AG04449 (cell line): ENCODE measurements at regions of chr3 and their contacts with region 1.

Region 1: DNA sequence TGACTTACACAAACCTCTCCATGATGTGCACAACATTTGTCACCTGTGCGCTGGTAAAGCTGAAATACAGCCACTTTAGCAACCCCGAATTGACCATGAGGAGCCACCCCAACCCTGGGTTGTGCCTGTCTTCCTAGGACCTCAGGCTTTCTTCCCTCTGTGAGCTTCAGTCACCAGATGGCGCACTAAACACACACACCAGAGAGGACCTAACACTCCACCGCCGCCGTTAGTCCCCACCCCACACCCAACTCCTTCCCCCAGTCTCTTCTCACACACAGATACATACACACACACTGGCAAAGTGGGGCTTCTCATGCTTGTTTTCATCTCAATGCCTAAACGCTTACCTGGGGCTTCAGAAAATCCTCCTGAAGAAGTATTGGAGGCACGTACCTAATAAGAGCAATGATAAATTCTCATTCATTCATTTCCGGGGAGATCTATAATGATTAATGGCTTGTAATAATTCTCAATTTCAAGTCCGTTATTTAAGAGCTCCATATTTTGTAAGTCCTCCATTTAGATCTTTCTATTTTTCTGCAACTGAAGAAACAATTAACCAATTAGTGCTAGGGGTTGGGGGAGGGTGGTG is 2.1 kb upstream of the CCDC80 start:
- DNase-seq: peak; percentile 67
- H3K4me3 ChIP-seq: no peak overlapping the region
- CTCF ChIP-seq: peak; percentile 82

Region 2: DNA sequence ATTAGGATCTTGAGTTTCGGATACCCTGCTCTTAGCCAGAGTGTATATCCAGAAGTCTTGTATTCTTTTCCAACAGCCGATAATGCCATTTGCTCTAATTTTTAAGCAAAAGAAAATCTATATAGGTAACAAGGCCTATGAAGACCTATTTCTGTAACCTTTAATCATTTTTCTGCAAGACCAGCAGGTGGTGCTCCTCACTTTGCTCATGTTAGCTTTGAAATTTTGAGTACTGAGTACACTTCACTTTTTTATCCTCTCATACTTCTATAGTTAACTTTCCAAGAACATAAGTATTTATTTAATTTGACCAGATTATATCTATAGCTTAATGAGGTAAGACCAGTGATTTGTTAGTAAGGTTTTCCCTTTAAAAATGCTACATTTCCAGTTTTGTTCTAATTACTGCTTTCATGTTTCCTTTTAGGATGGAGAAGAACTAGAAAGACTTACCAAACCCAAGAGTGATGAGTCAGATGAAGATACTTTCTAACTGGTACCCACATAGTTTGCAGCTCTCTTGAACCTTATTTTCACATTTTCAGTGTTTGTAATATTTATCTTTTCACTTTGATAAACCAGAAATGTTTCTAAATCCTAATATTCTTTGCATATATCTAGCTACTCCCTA is 60.6 kb before region 1 on chr3:
- CTCF ChIA-PET with region 1: interaction called, 36 read pairs
- POLR2A ChIA-PET with region 1: interaction called, 4 read pairs
- DNase-seq: peak; percentile 37
- H3K4me3 ChIP-seq: no peak overlapping the region
- CTCF ChIP-seq: peak; percentile 53

Region 3: GRCh38 chr3:112681822-112682325 is 38.9 kb after region 1 on chr3:
- CTCF ChIA-PET with region 1: interaction called, 13 read pairs
- POLR2A ChIA-PET with region 1: interaction called, 12 read pairs
- DNase-seq: peak; percentile 67
- H3K4me3 ChIP-seq: no peak overlapping the region
- CTCF ChIP-seq: no peak

Region 4: DNA sequence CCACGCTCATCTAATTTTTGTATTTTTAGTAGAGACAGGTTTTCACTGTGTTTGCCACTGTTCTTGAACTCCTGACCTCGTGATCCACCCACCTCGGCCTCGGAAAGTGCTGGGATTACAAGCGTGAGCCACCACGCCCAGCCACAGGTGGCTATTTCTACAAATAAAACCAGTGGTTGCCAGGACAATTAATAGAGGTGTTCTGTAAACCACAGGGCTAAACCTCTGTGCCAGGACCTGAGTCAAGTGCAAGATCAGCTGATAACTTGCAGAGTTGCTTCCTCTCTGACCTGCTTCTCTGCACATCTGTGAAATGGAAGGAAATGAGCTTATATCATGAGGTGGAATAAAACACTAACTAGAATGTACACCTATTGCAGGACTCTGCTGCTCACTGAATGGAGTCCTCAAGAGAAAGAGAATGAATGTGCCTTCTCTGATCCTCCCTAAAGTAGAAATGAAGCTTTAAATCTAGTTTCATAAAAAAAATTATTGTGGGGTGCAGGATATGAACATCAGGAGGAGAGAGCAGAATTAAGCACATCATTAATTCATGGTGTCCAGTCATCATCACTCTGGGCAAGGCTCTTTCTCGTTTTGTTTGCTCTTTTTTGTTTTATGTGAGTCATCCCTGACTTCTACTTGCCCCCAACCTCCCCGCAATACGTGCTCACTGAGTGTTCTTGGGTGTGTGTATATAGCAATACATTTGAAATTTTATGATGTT is 131.0 kb after region 1 on chr3:
- CTCF ChIA-PET with region 1: interaction called, 36 read pairs
- POLR2A ChIA-PET with region 1: interaction called, 5 read pairs
- DNase-seq: peak; percentile 69
- H3K4me3 ChIP-seq: no peak overlapping the region
- CTCF ChIP-seq: no peak

Region 5: DNA sequence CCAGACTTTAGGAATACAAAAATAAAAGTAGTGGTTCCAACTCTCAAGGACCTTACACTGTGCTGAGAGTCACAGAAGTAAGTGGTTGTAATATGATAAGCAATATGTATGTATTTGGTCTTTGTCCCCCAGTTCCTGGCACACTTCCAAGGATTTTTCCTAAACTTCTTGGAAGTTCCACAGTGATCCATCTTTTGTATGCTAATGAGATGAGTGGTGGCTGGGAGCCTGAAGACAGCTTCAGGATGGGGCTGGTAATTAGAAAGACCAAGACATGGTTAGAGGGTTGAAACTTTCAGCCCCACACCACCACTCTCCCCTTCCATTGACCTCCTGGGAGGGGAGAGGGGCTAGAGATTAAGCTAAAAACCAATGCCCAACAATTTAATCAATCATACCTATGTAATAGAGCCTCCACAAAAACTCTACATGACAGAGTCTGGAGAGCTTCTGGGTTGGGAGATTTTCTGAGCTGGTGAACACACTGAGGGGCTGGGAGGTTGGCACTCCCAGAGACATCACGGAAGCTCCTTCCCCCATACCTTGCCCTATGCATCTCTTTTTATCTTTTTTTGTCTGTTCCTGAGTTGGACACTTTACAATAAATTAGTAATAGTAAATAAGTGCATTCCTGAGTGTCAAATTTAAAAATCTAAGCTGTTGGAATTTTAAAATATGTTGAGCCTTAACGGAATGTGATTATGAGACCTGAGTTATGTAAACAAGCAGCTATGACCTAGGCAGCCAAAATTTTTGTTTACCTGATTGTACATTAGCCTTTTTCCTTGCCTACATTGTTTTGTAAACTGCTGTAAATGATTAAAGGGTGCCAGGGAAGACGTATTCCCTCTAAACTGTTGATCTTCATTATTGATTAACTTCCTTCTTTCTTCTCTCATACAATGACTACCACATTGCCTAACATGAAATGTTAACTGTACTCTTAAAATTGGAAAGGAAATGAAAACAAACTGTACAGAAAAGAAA is 179.4 kb after region 1 on chr3:
- CTCF ChIA-PET with region 1: interaction called, 223 read pairs
- POLR2A ChIA-PET with region 1: no interaction called
- DNase-seq: no peak
- H3K4me3 ChIP-seq: no peak overlapping the region
- CTCF ChIP-seq: no peak

Region 6: DNA sequence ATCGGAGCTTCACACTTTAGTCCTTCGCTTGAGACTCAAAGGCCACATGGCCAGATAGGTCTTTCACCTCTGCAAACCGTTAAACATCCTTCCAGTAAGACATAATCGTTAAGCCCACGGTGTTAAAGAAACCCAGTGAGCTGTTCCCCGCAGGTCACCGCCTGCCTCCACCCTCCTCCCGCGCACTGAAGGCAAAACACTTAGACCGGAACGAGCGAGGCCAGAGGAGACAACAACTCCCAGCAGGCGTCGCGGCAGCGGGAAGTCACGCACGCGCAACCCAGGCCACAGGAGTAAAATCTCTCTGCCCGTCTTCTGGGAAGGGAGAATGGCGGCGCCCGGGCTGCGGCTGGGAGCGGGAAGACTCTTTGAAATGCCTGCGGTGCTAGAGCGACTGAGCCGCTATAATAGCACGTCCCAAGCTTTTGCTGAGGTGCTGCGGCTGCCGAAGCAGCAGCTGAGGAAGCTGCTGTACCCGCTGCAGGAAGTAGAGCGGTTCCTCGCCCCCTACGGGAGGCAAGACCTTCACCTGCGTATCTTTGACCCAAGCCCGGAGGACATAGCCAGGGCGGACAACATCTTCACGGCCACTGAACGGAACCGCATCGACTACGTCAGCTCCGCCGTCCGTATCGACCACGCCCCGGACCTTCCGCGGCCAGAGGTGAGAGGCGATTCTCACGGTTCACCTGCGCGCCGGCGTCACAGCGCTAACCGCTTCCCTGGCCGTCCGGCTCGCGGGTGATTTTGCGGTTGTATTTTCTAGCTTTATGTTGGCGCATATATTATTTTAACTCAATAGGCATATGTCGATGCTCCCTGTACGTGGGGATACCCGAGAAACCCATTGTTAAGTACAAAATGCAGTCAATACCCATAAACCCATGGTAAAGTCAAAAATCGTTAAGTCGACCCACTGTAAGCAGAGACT is 347.9 kb after region 1 on chr3 and contains the start of gene GTPBP8:
- CTCF ChIA-PET with region 1: interaction called, 26 read pairs
- POLR2A ChIA-PET with region 1: interaction called, 3 read pairs
- DNase-seq: peak; percentile 29
- H3K4me3 ChIP-seq: peak within 1 kb of the TSS; percentile 96
- CTCF ChIP-seq: peak; percentile 18